Naive thymus-derived CD4-positive, alpha-beta T cell (primary cell): ENCODE measurements at regions of chr13 and their contacts with region 1.

Region 1: GRCh38 chr13:63731896-63732295 is 2316.2 kb upstream of the PCDH20 start:
- DNase-seq: no peak
- ATAC-seq: no peak
- H3K4me3 ChIP-seq: no peak overlapping the region
- H3K4me3 Mint-ChIP-seq: no peak overlapping the region
- H3K27ac ChIP-seq: no peak overlapping the region
- H3K27ac Mint-ChIP-seq: no peak overlapping the region
- H3K4me1 ChIP-seq: no peaks in the 10 kb centered on the region
- H3K4me1 Mint-ChIP-seq: no peaks in the 10 kb centered on the region
- H3K27me3 ChIP-seq: no peaks in the 10 kb centered on the region
- H3K27me3 Mint-ChIP-seq: no peaks in the 10 kb centered on the region

Region 2: DNA sequence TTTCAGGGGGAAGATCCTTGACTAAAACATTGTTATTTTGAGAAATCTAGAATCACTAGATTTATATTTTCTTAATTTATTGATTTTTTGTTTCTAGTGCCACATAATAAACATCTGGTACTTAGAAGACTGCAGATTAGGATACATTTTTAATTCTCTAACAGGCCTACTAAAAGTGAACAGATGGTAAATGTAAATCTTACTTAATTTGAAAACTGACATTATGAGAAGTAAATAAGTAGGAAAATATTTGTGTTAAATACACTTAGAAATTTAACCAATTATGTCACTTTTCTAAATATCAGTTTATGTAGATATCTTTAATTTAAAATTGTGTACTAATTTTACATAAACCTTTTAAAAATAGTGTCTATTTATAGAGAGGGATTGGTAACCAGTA is 60.6 kb before region 1 on chr13:
- CTCF ChIA-PET with region 1: no interaction called
- POLR2A ChIA-PET with region 1: no interaction called
- intact Hi-C with region 1: loop called in 1 of 2 experiments (anchors 2 kb)
- DNase-seq: no peak
- ATAC-seq: no peak
- H3K4me3 ChIP-seq: no peak overlapping the region
- H3K4me3 Mint-ChIP-seq: no peak overlapping the region
- H3K27ac ChIP-seq: no peak overlapping the region
- H3K27ac Mint-ChIP-seq: no peak overlapping the region
- H3K4me1 ChIP-seq: no peaks in the 10 kb centered on the region
- H3K4me1 Mint-ChIP-seq: no peaks in the 10 kb centered on the region
- H3K27me3 ChIP-seq: no peaks in the 10 kb centered on the region
- H3K27me3 Mint-ChIP-seq: no peaks in the 10 kb centered on the region

Region 3: GRCh38 chr13:63853816-63854215 is 121.9 kb after region 1 on chr13:
- CTCF ChIA-PET with region 1: no interaction called
- POLR2A ChIA-PET with region 1: no interaction called
- intact Hi-C with region 1: no loop called
- DNase-seq: no peak
- ATAC-seq: no peak
- H3K4me3 ChIP-seq: no peak overlapping the region
- H3K4me3 Mint-ChIP-seq: no peak overlapping the region
- H3K27ac ChIP-seq: no peak overlapping the region
- H3K27ac Mint-ChIP-seq: no peak overlapping the region
- H3K4me1 ChIP-seq: no peaks in the 10 kb centered on the region
- H3K4me1 Mint-ChIP-seq: no peaks in the 10 kb centered on the region
- H3K27me3 ChIP-seq: no peaks in the 10 kb centered on the region
- H3K27me3 Mint-ChIP-seq: no peaks in the 10 kb centered on the region